Ascending aorta (tissue), 2 donors: ENCODE measurements at regions of chr20 and their contacts with region 1.

Region 1: GRCh38 chr20:35720165-35721123 is 21.2 kb downstream of the ROMO1 start:
- DNase-seq: no peak
- H3K4me3 ChIP-seq: no peak overlapping the region
- H3K27ac ChIP-seq: no peak overlapping the region
- H3K4me1 ChIP-seq: peaks cover 0 to 4% of the 10 kb centered on the region in 2 donors
- H3K27me3 ChIP-seq: no peaks in the 10 kb centered on the region
- CTCF ChIP-seq: no peak

Region 2: DNA sequence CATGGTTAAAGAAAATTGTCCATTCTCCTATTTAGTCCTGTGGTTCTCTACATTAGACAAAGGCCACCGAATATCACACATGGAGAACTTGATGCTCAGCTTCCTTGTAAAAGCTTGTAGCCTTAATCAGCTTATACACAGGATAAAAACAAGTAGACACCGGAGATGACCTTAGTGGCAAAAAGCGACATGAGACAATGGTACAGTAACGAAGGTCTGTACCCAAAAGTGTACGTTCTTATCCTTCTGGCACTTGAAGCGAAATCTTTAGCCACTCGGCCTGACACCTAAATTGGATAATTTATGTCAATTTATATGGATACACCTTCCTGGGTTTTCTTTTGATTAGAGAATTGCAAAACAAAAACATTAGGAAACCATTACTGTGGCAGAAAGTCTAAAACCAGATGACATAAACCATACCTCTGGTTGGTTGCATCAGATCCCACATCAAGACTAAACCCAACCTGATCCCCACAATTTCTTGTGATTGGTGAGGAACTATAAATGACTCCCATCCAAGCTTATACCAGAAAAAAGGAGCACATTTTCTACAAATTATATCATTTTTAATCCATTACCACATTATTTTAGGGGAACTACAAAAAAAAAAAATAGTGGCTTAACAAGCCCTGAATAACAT is 15.5 kb after region 1 on chr20:
- intact Hi-C with region 1: loop called (anchors 2 kb)
- DNase-seq: no peak
- H3K4me3 ChIP-seq: peak overlapping the region in 1 of 2 donors; percentile 19
- H3K27ac ChIP-seq: no peak overlapping the region
- H3K4me1 ChIP-seq: peaks cover 15 to 68% of the 10 kb centered on the region in 2 donors
- H3K27me3 ChIP-seq: no peaks in the 10 kb centered on the region
- CTCF ChIP-seq: no peak